Lower leg skin (tissue), 4 donors: ENCODE measurements at regions of chr20 and their contacts with region 1.

Region 1: GRCh38 chr20:22601361-22602141 is 17.2 kb upstream of the FOXA2 start:
- DNase-seq: no peak
- H3K4me3 ChIP-seq: no peak overlapping the region
- CTCF ChIP-seq: no peak
- POLR2A ChIP-seq: no peak

Region 2: GRCh38 chr20:22652681-22653588 is 51.4 kb after region 1 on chr20:
- intact Hi-C with region 1: no loop called
- DNase-seq: no peak
- H3K4me3 ChIP-seq: no peak overlapping the region
- CTCF ChIP-seq: no peak
- POLR2A ChIP-seq: no peak

Region 3: GRCh38 chr20:22663528-22664025 is 62.0 kb after region 1 on chr20:
- intact Hi-C with region 1: loop called (anchors 10 kb)
- DNase-seq: no peak
- H3K4me3 ChIP-seq: no peak overlapping the region
- CTCF ChIP-seq: no peak
- POLR2A ChIP-seq: no peak

Region 4: DNA sequence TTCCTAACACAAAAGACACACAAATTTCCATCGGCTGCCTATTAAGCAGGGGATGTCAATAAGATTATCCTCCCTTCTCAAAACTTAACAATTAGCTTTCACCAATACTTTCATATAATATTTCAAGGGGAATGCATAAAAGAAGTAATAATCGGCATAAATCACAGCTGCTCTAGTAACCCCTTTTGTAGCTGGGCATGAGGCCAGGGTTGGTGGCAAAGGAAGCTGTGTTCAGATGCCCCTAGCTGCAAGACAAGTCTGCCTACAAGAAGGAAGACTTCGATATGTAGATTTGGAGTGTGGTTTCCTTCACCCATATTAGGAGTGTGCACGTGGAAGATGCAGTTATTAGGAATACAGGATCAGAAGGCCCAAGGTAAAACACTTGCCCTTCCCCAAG is 276.6 kb after region 1 on chr20:
- intact Hi-C with region 1: no loop called
- DNase-seq: no peak
- H3K4me3 ChIP-seq: no peak overlapping the region
- CTCF ChIP-seq: no peak
- POLR2A ChIP-seq: no peak

Region 5: DNA sequence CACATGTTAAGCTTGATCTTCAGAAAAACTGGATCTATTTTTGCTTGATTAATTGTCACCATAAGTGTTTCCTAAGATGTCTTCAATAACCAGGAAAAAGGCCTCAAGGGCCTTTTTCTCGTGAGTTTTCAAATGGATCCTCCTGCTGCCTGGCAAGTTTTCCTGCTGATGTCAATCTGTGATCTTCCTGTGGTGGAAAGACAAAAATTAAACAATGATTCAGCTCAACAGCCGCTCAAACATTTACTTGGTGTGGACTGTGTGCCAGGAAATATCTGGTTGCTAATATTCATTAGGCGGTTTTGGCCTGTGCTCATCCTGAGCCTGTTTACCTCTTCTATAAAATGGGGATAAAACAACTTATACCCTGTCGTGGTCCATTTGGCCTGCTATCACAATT is 398.2 kb after region 1 on chr20:
- intact Hi-C with region 1: no loop called
- DNase-seq: no peak
- H3K4me3 ChIP-seq: no peak overlapping the region
- CTCF ChIP-seq: no peak
- POLR2A ChIP-seq: no peak